Panc1 (cell line): ENCODE measurements at regions of chr7 and their contacts with region 1.

Region 1: DNA sequence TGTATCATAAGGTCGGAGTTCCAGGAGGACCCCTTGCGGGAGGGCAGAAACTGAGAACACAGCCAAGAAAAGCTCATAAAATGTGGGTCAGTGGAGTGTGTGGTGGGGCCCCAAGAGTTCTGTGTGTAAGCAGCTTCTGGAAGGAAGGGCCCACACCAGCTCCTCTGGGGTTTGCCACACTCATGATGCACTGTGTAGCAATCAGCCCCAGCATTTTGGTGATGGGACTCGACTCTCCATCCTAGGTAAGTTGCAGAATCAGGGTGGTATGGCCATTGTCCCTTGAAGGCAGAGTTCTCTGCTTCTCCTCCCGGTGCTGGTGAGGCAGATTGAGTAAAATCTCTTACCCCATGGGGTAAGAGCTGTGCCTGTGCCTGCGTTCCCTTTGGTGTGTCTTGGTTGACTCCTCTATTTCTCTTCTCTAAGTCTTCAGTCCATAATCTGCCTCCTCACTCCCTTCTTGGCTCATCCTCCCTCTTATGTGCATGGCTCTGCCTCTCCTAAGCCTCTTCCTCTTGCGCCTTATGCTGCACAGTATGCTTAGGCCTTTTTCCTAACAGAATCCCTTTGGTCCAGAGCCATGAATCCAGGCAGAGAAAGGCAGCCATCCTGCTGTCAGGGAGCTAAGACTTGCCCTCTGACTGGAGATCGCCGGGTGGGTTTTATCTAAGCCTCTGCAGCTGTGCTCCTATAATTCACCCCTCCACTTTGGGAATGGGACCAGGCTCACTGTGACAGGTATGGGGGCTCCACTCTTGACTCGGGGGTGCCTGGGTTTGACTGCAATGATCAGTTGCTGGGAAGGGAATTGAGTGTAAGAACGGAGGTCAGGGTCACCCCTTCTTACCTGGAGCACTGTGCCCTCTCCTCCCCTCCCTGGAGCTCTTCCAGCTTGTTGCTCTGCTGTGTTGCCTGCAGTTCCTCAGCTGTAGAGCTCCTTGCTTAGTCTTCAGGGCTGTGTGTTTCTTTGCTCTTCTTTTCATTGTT is 17.8 kb downstream of the PRSS2 start:
- DNase-seq: no peak
- ATAC-seq: no peak
- H3K4me3 ChIP-seq: no peak overlapping the region
- H3K27ac ChIP-seq: no peak overlapping the region
- H3K4me1 ChIP-seq: no peaks in the 10 kb centered on the region
- H3K27me3 ChIP-seq: peaks cover 4% of the 10 kb centered on the region; the same call in 1 of the 2 replicates
- CTCF ChIP-seq: no peak

Region 2: DNA sequence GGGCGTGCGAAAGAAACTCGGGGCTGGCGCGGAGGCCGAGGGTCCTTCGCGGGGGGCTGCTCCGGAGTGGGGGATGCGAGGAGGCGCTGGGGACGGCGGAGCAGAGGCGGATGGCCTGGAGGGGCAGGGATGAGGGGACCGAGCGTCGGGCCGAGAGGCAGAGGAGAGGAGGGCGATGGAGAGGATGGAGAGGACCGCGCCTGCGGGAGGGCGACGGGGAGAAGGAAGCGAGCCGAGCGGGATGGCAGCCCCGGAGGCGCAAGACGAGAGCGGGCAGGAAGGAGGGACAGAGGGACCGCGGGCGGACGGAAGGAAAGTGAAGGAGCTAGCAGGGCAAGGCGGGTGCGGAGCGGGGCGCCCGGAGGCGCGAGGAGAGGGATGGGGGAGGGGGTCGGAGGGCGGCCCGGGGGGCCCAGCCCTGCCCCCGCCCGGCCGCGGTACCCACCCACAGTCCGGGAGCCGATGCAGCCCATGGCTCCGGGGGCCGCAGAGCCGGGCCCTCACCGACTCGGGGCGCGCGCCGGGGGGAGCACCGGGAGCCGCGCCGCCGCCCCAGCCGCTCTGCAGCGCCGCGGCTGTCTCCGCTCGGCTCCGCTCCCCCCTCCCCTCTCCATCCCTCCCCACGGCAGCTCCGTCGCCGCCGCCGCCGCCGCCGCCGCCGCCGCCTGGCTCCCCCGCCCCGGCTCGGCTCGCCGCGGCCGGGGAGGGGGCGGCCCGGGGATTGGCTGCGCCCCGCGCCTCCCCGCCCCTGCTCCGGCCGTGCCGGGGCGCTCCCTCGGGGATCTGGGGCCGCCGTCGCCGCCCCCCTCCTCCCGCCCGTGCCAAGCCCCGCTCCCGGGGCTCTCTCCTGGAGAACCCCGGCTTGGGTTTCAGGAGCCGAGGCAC is 573.8 kb after region 1 on chr7 and contains the start of gene FAM131B:
- CTCF ChIA-PET with region 1: no interaction called
- POLR2A ChIA-PET with region 1: interaction called, 18 read pairs
- in situ Hi-C with region 1: no loop called
- intact Hi-C with region 1: no loop called
- DNase-seq: no peak
- ATAC-seq: peak; percentile 69
- H3K4me3 ChIP-seq: peak within 1 kb of the TSS; percentile 44 to 51
- H3K27ac ChIP-seq: no peak within 1 kb of the TSS
- H3K4me1 ChIP-seq: no peaks in the 10 kb centered on the region
- H3K27me3 ChIP-seq: peaks cover 27% of the 10 kb centered on the region
- CTCF ChIP-seq: no peak
- total RNA-seq, gene FAM131B: 1.5 TPM